HAP-1 (cell line): ENCODE measurements at regions of chr20 and their contacts with region 1.

Region 1: GRCh38 chr20:48904365-48905296 is 16.9 kb upstream of the ARFGEF2 start:
- DNase-seq: peak; percentile 51 to 76
- H3K4me3 ChIP-seq: no peak overlapping the region
- H3K4me1 ChIP-seq: no peaks in the 10 kb centered on the region
- H3K27me3 ChIP-seq: no peaks in the 10 kb centered on the region

Region 2: GRCh38 chr20:47479506-47479905 is 1425.1 kb before region 1 on chr20:
- in situ Hi-C with region 1: no loop called
- DNase-seq: no peak
- H3K4me3 ChIP-seq: no peak overlapping the region
- H3K4me1 ChIP-seq: no peaks in the 10 kb centered on the region
- H3K27me3 ChIP-seq: no peaks in the 10 kb centered on the region

Region 3: GRCh38 chr20:48657475-48658470 is 246.9 kb before region 1 on chr20:
- in situ Hi-C with region 1: loop called (anchors 5 kb)
- DNase-seq: peak; percentile 72 to 73
- H3K4me3 ChIP-seq: no peak overlapping the region
- H3K4me1 ChIP-seq: no peaks in the 10 kb centered on the region
- H3K27me3 ChIP-seq: no peaks in the 10 kb centered on the region